IMR-90 (cell line): ENCODE measurements at regions of chr14 and their contacts with region 1.

Region 1: GRCh38 chr14:23068476-23069412 is 11.4 kb upstream of the CDH24 start:
- DNase-seq: peak; percentile 93
- ATAC-seq: peak; percentile 69
- H3K4me3 ChIP-seq: no peak overlapping the region
- H3K27ac ChIP-seq: peak overlapping the region; percentile 14
- H3K4me1 ChIP-seq: peaks cover 13% of the 10 kb centered on the region
- H3K27me3 ChIP-seq: no peaks in the 10 kb centered on the region
- CTCF ChIP-seq: peak; percentile 100
- POLR2A ChIP-seq: no peak
- RAD21 ChIP-seq: peak; percentile 80

Region 2: DNA sequence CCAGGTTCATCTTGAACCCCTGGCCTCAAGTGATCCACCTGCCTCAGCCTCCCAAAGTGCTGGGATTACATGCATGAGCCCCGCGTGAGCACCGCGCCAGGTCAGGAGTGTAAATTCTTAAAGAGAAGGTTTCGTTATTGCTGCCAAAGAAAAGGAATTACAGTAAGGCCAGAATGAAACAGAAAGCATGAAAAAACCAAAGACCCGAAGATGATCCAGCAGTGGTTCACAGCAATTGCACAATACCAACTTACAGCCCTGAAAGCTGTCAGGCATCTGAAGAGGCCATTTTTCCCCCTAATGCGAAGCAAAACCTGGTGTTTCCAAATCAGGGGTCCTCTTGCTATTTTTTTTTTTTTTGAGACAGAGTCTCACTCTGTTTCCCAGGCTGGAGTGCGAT is 160.1 kb before region 1 on chr14:
- CTCF ChIA-PET with region 1: no interaction called
- POLR2A ChIA-PET with region 1: no interaction called
- dilution Hi-C with region 1: no loop called
- in situ Hi-C with region 1: no loop called
- intact Hi-C with region 1: no loop called
- DNase-seq: peak; percentile 51
- ATAC-seq: peak; percentile 42; the same call in 1 of the 2 replicates
- H3K4me3 ChIP-seq: no peak overlapping the region
- H3K27ac ChIP-seq: no peak overlapping the region
- H3K4me1 ChIP-seq: no peaks in the 10 kb centered on the region
- H3K27me3 ChIP-seq: no peaks in the 10 kb centered on the region
- CTCF ChIP-seq: no peak
- POLR2A ChIP-seq: no peak
- RAD21 ChIP-seq: no peak

Region 3: GRCh38 chr14:23057757-23058653 is 10.7 kb before region 1 on chr14:
- CTCF ChIA-PET with region 1: interaction called, 11 read pairs
- POLR2A ChIA-PET with region 1: interaction called, 7 read pairs
- dilution Hi-C with region 1: no loop called
- in situ Hi-C with region 1: no loop called
- intact Hi-C with region 1: no loop called
- DNase-seq: peak; percentile 76
- ATAC-seq: peak; percentile 55
- H3K4me3 ChIP-seq: peak overlapping the region; percentile 62
- H3K27ac ChIP-seq: peak overlapping the region; percentile 70
- H3K4me1 ChIP-seq: peaks cover 19% of the 10 kb centered on the region
- H3K27me3 ChIP-seq: no peaks in the 10 kb centered on the region
- CTCF ChIP-seq: peak; percentile 89
- POLR2A ChIP-seq: no peak; the same call in 1 of the 2 replicates
- RAD21 ChIP-seq: peak; percentile 82

Region 4: DNA sequence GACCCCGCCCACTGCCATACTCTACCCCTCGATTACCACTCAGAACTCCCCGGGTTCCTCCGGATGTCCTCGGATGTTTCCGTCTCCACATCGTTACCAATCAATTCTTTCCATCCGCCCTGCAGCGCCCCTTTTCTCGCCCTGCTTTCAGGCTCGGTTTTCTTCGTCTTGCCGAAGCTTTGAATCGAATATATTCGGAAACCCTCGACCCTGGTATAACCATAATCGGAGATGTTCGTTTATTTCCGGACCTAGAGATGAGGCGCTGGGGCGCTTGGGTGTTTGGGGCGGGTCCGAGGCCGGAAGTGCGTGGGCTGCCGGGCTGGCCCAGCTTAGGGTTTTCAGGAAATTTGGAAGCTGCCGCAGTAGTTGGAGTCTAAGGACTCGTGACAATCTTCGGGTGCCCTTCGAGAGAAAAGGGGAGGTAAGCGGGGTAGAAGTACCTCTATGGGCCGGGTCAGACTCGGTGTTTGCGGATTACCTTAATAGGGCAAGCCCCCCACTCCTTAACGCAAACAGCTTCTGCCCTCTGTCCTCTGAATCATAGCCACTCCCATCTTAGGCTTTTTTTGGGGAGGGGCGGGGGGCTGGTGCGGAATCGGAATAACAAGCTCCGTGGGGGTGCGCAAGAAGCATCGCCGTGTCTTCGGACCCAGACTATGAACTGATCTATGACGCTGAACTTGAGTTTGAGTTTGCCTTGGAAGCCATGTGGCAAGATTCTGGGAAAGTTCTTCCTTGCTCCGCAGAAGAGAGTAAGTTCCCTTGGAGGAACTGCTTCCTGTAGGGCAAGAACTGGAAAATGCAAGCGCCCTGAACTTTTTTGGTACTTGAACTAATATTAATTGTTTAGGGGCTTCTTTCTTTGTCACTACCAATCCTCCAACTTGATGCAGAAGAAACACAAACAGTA is 26.7 kb after region 1 on chr14 and contains the start of gene C14orf119:
- CTCF ChIA-PET with region 1: interaction called, 19 read pairs
- POLR2A ChIA-PET with region 1: interaction called, 6 read pairs
- dilution Hi-C with region 1: no loop called
- in situ Hi-C with region 1: loop called (anchors 5 kb)
- intact Hi-C with region 1: no loop called
- DNase-seq: peak; percentile 99
- ATAC-seq: peak; percentile 91
- H3K4me3 ChIP-seq: peak within 1 kb of the TSS; percentile 67
- H3K27ac ChIP-seq: peak within 1 kb of the TSS; percentile 97
- H3K4me1 ChIP-seq: peaks cover 3% of the 10 kb centered on the region; the same call in 1 of the 2 replicates
- H3K27me3 ChIP-seq: no peaks in the 10 kb centered on the region
- CTCF ChIP-seq: no peak
- POLR2A ChIP-seq: peak; percentile 91; the same call in 1 of the 2 replicates
- RAD21 ChIP-seq: no peak
- total RNA-seq, gene C14orf119: 61.9 and 83.7 TPM in 2 replicates

Region 5: GRCh38 chr14:23109769-23110168 is 41.0 kb after region 1 on chr14:
- CTCF ChIA-PET with region 1: interaction called, 18 read pairs
- POLR2A ChIA-PET with region 1: no interaction called
- dilution Hi-C with region 1: no loop called
- in situ Hi-C with region 1: loop called (anchors 5 kb)
- intact Hi-C with region 1: loop called (anchors 1 kb)
- DNase-seq: no peak
- ATAC-seq: no peak
- H3K4me3 ChIP-seq: no peak overlapping the region
- H3K27ac ChIP-seq: no peak overlapping the region
- H3K4me1 ChIP-seq: peaks cover 22% of the 10 kb centered on the region
- H3K27me3 ChIP-seq: no peaks in the 10 kb centered on the region
- CTCF ChIP-seq: no peak
- POLR2A ChIP-seq: no peak
- RAD21 ChIP-seq: no peak